ENCODE measurements at regions of chr3 and their contacts with region 1.

Region 1: DNA sequence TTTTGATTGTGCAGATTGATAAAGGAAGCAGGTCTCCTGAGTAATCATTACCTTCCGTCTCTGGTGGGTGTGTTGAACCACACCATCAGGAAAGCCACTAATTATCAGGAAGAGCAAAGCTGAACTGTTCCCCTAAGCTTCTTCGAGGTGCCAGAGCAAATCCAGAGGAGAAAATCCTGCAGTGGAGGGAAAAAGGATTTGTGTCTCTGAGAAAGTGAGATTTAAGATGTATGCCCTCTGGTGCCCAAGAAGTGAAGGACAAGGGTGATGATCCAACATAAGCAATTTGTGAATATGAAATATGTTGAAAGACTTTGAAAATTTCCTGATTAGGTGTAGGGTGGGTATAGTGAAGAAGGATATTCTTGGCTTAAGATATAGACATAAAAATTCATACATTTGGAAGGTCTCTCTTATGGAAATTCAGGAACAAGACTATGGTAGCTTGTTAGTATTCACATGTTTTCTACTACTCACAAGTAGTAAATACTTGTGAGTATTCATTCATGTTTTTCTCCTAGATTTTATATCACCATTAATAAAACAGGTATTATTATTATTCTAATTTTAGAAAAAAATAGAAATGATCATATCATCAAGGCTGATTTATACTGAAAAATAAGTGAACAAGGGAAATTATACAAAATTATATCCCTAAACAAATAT is 34.8 kb downstream of the COMMD2 start:
- DNase-seq: peak; percentile 31 to 83
- ATAC-seq: peak; percentile 85 to 87
- H3K4me3 ChIP-seq: no peak overlapping the region
- H3K27ac ChIP-seq: peak overlapping the region; percentile 58 to 64
- H3K4me1 ChIP-seq: peaks cover 6% of the 10 kb centered on the region
- CTCF ChIP-seq: peak; percentile 85
- EP300 ChIP-seq: no peak
- POLR2A ChIP-seq: no peak
- RAD21 ChIP-seq: peak; percentile 81 to 84

Region 2: GRCh38 chr3:149519912-149520311 is 197.6 kb before region 1 on chr3:
- CTCF ChIA-PET with region 1: interaction called, 14 read pairs
- POLR2A ChIA-PET with region 1: no interaction called
- DNase-seq: no peak
- ATAC-seq: no peak
- H3K4me3 ChIP-seq: no peak overlapping the region
- H3K27ac ChIP-seq: no peak overlapping the region
- H3K4me1 ChIP-seq: peaks cover 20% of the 10 kb centered on the region; the same call in 2 of the 3 replicates
- CTCF ChIP-seq: no peak
- EP300 ChIP-seq: no peak
- POLR2A ChIP-seq: no peak
- RAD21 ChIP-seq: no peak

Region 3: DNA sequence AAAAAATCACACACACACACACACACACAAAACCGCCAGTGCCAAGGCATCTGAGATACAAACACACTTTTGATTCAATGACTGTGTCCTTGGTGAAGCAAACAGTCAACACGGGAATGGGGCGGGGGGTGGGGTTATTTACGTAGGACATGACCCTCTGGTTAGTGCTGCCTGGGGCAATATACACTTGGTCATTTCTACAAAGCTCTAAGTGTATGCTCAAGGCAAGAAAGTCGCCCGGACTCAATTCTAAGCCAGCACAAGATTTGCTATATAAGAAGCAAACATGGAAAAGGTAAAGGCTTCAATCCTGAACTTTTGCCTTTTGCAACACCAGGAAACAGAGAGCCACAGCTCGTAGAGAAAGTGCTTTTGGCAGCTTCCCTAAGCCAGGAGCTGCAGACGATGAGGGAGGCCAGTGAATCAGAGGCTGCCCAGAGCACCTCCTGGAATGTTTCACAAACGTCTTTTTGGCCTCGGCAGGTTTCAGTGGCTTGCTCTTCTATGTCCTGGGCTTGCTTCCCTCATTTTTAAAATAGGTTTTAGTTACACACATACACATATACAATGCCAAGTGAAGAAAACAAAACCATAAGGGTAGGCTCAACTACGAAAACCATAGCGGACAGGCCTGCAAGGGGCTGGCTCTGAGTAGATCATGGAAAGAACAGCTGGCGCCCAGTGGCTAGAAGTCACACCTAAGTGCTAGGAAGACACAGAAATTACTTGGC is 169.4 kb before region 1 on chr3:
- CTCF ChIA-PET with region 1: interaction called, 21 read pairs
- POLR2A ChIA-PET with region 1: no interaction called
- DNase-seq: peak; percentile 87 to 95
- ATAC-seq: peak; percentile 93 to 97
- H3K4me3 ChIP-seq: peak overlapping the region; percentile 21; the same call in 2 of the 3 replicates
- H3K27ac ChIP-seq: peak overlapping the region; percentile 92 to 93
- H3K4me1 ChIP-seq: peaks cover 86% of the 10 kb centered on the region
- CTCF ChIP-seq: no peak
- EP300 ChIP-seq: peak; percentile 78 to 91; a peak in 4 of 5 replicates
- POLR2A ChIP-seq: no peak
- RAD21 ChIP-seq: peak in 1 of 2 experiments; percentile 47; a peak in 3 of 5 replicates

Region 4: GRCh38 chr3:149575961-149576564 is 141.5 kb before region 1 on chr3:
- CTCF ChIA-PET with region 1: interaction called, 11 read pairs
- POLR2A ChIA-PET with region 1: no interaction called
- DNase-seq: peak; percentile 62 to 89
- ATAC-seq: peak; percentile 87 to 88
- H3K4me3 ChIP-seq: peak overlapping the region; percentile 15; the same call in 2 of the 3 replicates
- H3K27ac ChIP-seq: peak overlapping the region; percentile 94
- H3K4me1 ChIP-seq: peaks cover 98% of the 10 kb centered on the region
- CTCF ChIP-seq: no peak
- EP300 ChIP-seq: peak; percentile 80 to 91; a peak in 3 of 5 replicates
- POLR2A ChIP-seq: no peak
- RAD21 ChIP-seq: peak; percentile 33 to 49

Region 5: DNA sequence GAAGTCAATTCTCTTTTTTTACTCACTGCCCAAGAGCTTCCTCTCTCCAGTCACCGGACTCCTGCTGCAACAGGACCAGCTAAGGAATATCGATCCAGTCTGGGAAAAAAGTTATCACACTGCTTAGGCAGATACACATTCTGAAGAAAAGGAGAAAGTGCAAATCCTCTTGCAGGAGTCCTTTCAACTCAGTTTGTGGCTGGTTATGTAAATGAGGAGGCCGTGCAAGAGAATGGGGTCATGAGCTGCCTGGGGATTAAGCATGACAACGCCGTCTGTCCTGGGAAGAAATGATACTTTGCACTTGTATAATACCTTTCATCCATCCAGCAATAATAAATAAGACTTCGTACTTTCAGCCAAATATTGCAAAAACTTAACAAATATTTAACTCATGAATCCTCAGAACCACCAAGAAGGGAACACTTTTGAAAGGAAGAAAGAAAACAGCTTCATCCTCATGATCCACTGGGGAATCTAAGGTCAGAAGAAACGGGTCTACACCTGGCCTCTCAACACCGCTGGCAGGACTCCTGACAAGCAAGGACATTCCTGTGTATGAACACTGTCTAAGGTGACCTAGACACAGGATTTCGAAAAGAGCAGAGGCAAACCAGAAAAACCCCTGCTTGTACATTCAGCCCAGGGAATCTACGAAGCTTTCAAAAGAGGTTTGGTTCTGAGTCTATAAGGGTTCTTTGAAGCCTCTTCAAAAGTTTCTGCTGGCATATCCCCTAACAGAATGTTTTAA is 46.6 kb before region 1 on chr3:
- CTCF ChIA-PET with region 1: interaction called, 10 read pairs
- POLR2A ChIA-PET with region 1: no interaction called
- DNase-seq: no peak
- ATAC-seq: peak in 1 of 2 experiments; percentile 22; a peak in 4 of 6 replicates
- H3K4me3 ChIP-seq: no peak overlapping the region
- H3K27ac ChIP-seq: no peak overlapping the region
- H3K4me1 ChIP-seq: peaks cover 9% of the 10 kb centered on the region
- CTCF ChIP-seq: no peak
- EP300 ChIP-seq: no peak
- POLR2A ChIP-seq: no peak
- RAD21 ChIP-seq: no peak

Region 6: GRCh38 chr3:149702691-149703441 is 14.7 kb before region 1 on chr3:
- CTCF ChIA-PET with region 1: interaction called, 22 read pairs
- POLR2A ChIA-PET with region 1: no interaction called
- DNase-seq: no peak
- ATAC-seq: no peak
- H3K4me3 ChIP-seq: no peak overlapping the region
- H3K27ac ChIP-seq: no peak overlapping the region
- H3K4me1 ChIP-seq: 0 out of 3 replicates have a peak, but pooled peaks cover 6% of the 10 kb centered on the region
- CTCF ChIP-seq: no peak
- EP300 ChIP-seq: no peak
- POLR2A ChIP-seq: no peak
- RAD21 ChIP-seq: no peak

Region 7: GRCh38 chr3:149967086-149967685 is 249.7 kb after region 1 on chr3:
- CTCF ChIA-PET with region 1: no interaction called
- POLR2A ChIA-PET with region 1: no interaction called
- DNase-seq: peak; percentile 25 to 55
- ATAC-seq: no peak
- H3K4me3 ChIP-seq: no peak overlapping the region
- H3K27ac ChIP-seq: no peak overlapping the region
- H3K4me1 ChIP-seq: peaks cover 42% of the 10 kb centered on the region
- CTCF ChIP-seq: peak; percentile 71
- EP300 ChIP-seq: no peak
- POLR2A ChIP-seq: no peak
- RAD21 ChIP-seq: peak; percentile 68 to 80

Measured in A549 (cell line).